Esophagus squamous epithelium (tissue), 5 donors: ENCODE measurements at regions of chr16 and their contacts with region 1.

Region 1: GRCh38 chr16:11361701-11362451 is 16.6 kb downstream of the RMI2 start:
- DNase-seq: no peak
- H3K4me3 ChIP-seq: peak overlapping the region in 1 of 4 donors; percentile 2
- H3K27ac ChIP-seq: no peak overlapping the region
- H3K4me1 ChIP-seq: peaks cover 24 to 80% (median 44%) of the 10 kb centered on the region in 3 donors
- H3K27me3 ChIP-seq: no peaks in the 10 kb centered on the region
- CTCF ChIP-seq: no peak
- POLR2A ChIP-seq: no peak

Region 2: DNA sequence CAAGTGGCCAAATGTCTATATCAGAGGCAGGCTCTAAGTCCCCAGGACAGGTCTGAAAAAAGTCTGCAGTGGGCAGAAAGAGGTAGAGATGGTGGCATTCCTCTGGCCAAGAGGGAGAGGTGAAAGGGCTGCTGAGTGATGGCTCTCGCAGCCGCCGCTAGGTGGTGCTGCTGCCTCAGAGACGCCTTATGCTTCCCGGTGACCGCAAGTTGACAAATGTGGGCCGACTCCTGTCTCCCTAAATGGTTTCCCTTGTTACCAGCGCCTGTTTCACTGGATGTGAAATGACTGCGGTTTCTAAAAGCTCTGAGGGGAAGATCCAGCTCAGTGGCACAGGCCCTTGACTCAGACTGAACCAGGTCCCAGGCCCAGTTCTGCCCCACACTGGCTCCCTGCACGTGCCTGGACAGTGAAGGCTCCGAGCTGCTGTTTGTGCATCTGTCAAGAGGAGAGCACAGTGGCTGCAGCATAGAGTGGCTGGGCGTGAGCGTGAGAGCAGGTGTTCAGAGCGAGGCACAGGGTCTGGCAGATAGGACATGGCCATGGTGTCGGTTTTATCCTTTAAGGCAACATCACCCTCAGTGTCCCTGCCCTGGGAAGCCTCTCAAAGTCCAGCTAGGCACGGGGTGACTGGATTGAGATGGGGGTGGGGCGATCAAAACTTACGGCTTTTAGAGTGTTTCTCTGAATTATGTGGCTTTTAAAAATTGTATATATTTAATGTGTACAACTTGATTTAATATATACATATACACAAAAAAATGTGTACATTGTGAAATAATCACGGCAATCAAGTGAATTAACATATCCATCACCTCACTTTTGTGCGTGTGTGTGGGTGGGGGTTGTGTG is 397.6 kb before region 1 on chr16:
- intact Hi-C with region 1: loop called (anchors 10 kb)
- DNase-seq: no peak
- H3K4me3 ChIP-seq: no peak overlapping the region
- H3K27ac ChIP-seq: peak overlapping the region in 2 of 4 donors; percentile 32 to 53
- H3K4me1 ChIP-seq: peaks cover 3 to 23% (median 4%) of the 10 kb centered on the region in 3 donors
- H3K27me3 ChIP-seq: no peaks in the 10 kb centered on the region
- CTCF ChIP-seq: peak; percentile 88 to 96 (median 90)
- POLR2A ChIP-seq: no peak